Posterior vena cava (tissue), 2 donors: ENCODE measurements at regions of chr12 and their contacts with region 1.

Region 1: DNA sequence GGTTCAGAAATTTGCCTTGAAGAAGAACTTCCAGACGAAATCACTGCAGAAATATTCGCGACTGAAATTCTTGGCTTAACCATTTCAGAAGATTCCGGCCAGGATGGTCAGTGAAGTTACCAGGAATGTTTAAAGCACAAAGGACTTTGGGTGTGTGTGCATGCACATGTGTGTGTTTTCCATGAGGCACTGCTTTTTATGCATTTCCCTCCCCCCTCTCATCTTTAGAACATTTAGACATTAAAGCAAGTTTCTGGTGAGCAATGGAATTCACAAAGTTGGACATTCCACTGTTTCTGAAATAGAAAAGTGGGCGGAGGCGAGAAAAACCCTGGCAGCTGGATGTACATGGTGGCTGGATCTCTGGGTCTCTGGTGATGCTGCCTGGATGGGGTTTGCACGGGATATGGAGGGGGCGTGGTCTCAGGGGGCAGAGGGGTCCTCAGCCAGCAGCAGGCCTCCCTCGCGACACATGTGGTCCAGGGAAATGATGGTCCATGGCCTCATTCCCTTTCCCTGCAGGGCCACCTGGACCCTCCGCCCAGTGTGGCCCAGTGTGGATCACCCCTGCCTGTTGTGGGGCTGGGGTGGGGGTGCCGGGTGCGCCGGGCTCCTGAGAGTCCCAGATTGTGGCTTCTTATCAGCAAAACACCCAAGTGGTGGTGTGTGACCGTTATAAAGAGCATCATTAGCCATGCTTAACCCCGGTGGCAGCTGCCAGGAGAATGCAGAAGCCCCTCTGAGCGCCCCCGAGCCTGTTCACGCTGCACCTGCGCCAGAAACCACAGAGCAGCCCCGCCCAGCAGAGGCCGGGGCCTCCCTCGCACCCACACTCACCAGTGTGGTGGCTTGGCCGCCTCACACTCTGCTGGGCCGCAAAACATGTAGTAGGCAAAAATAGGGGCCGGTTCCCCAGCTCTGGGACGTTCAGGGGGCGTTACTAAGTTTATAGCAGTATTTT is 17.8 kb upstream of the BCL7A start:
- DNase-seq: no peak

Region 2: GRCh38 chr12:121964813-121965643 is 38.9 kb before region 1 on chr12:
- intact Hi-C with region 1: loop called in 1 of 2 experiments (anchors 5 kb)
- DNase-seq: no peak